ENCODE measurements at regions of chr14 and their contacts with region 1.

Region 1: DNA sequence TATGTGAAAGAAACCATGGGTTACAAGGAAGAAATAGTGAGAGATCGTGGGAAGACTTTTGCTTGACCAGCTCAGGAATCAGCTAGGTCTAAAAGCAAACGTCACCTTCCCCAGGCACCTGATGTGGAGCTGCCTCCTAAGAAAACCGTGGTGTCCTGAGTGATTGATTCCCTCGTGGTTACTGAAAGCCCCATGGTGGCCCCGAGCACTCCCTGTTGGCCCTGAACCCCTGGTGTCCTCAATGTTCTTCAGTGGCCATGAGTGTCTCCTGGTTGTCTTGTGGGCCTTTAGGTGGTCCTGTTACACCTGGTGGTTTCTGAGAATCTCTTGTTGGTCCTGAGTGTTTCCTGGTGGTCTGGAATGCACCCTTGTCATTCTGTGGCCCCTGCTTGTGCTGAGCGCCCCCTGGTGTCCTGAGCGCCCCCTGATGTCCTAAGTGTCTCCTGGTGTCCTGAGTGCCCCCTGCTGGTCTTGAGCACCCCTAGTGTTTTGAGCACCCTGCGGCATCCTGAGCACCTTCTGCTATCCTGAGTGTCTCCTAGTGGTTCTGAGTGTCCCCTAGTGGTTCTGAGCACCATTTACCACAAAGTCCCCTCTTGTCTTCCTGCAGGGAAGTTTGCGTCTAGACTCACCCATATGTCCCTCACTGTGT is 518.7 kb downstream of the TMEM121 start:
- DNase-seq: peak; percentile 91
- ATAC-seq: peak; percentile 100
- H3K4me3 Mint-ChIP-seq: no peak overlapping the region
- H3K27ac Mint-ChIP-seq: no peak overlapping the region
- H3K4me1 Mint-ChIP-seq: peaks cover 6% of the 10 kb centered on the region
- H3K27me3 Mint-ChIP-seq: peaks cover 34% of the 10 kb centered on the region

Region 2: GRCh38 chr14:106024983-106025604 is 20.0 kb before region 1 on chr14:
- CTCF ChIA-PET with region 1: interaction called, 17 read pairs
- POLR2A ChIA-PET with region 1: no interaction called
- DNase-seq: peak; percentile 69
- ATAC-seq: peak; percentile 94
- H3K4me3 Mint-ChIP-seq: no peak overlapping the region
- H3K27ac Mint-ChIP-seq: peak overlapping the region; percentile 51
- H3K4me1 Mint-ChIP-seq: peaks cover 25% of the 10 kb centered on the region
- H3K27me3 Mint-ChIP-seq: peaks cover 15% of the 10 kb centered on the region

Region 3: DNA sequence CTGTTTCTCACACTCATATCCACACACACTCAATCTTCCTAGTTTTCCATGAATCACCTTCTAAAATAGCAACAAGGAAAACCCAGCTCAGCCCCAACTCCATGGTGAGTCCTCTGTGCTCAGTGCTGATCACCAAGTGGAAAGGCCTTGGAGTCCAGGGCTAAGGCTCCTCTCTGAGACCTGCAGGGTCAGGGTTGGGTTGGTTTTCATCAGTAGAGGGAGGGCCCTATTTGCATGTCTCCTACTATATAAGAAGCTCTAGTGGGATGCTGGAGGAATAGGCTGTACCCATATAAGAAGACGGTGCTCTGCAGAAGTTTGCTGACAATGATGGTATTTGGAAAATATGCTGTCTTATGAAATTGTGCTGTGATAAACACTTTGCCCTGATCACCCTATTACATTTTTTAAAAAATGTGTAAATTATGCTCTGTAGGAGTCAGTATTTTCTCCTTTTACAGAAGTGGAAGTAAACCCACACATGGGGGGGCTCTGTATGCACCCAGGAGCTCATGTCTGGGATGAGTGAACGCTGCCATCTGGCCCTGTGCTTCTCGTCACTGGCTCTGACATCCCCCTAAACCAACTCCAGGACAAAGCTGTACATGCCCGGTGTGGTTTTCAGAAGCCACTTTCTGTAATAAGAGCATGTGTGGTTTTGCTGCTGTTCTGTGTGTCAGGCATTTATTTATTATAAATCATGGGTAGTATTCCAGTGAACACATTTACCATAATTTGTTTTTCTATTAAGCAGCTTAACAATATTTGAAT is 17.6 kb after region 1 on chr14:
- CTCF ChIA-PET with region 1: interaction called, 30 read pairs
- POLR2A ChIA-PET with region 1: no interaction called
- DNase-seq: no peak
- ATAC-seq: no peak
- H3K4me3 Mint-ChIP-seq: no peak overlapping the region
- H3K27ac Mint-ChIP-seq: no peak overlapping the region
- H3K4me1 Mint-ChIP-seq: peaks cover 18% of the 10 kb centered on the region
- H3K27me3 Mint-ChIP-seq: peaks cover 41% of the 10 kb centered on the region

Region 4: GRCh38 chr14:106141242-106142220 is 96.5 kb after region 1 on chr14:
- CTCF ChIA-PET with region 1: no interaction called
- POLR2A ChIA-PET with region 1: no interaction called
- DNase-seq: no peak
- ATAC-seq: peak; percentile 44
- H3K4me3 Mint-ChIP-seq: no peak overlapping the region
- H3K27ac Mint-ChIP-seq: no peak overlapping the region
- H3K4me1 Mint-ChIP-seq: peaks cover 15% of the 10 kb centered on the region
- H3K27me3 Mint-ChIP-seq: no peaks in the 10 kb centered on the region

Region 5: GRCh38 chr14:106372870-106373652 is 328.0 kb after region 1 on chr14:
- CTCF ChIA-PET with region 1: interaction called, 13 read pairs
- POLR2A ChIA-PET with region 1: no interaction called
- DNase-seq: peak; percentile 88
- ATAC-seq: peak; percentile 97
- H3K4me3 Mint-ChIP-seq: no peak overlapping the region
- H3K27ac Mint-ChIP-seq: peak overlapping the region; percentile 26
- H3K4me1 Mint-ChIP-seq: peaks cover 30% of the 10 kb centered on the region
- H3K27me3 Mint-ChIP-seq: peaks cover 19% of the 10 kb centered on the region